Caco-2 (cell line): ENCODE measurements at regions of chr6 and their contacts with region 1.

Region 1: GRCh38 chr6:87139236-87139635 is 16.1 kb upstream of the ZNF292 start:
- DNase-seq: peak in 1 of 2 experiments; percentile 60
- H3K4me3 ChIP-seq: no peak overlapping the region
- H3K4me3 Mint-ChIP-seq: no peak overlapping the region
- H3K27ac Mint-ChIP-seq: no peak overlapping the region
- H3K4me1 ChIP-seq: no peaks in the 10 kb centered on the region
- H3K4me1 Mint-ChIP-seq: no peaks in the 10 kb centered on the region
- H3K27me3 ChIP-seq: no peaks in the 10 kb centered on the region
- H3K27me3 Mint-ChIP-seq: peaks cover 13% of the 10 kb centered on the region
- CTCF ChIP-seq: peak; percentile 61 to 71

Region 2: DNA sequence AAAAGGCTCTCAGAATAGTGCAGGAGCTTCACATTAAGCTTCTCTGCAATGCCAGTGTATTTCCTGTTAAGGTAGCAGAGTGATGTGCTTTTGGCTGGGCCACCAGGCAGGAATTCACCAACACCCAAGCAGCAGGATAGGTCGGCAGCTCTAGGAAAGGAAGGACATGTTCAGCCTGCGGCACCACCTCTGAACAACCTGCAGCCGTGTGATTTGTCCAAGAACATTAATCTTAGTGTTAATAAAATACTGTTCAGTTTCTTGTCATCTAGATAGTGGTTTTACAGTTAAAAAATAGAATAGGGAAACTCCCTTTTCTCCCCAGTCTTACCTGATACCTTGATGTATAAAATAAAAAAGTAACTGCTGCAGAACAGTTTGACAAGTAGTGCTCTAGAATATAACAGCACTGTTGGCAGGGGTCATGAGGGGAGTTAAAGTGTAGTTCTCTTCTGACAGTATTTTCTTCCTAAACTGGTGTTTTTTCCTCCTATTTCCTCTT is 34.9 kb after region 1 on chr6:
- CTCF ChIA-PET with region 1: no interaction called
- POLR2A ChIA-PET with region 1: no interaction called
- intact Hi-C with region 1: no loop called
- DNase-seq: no peak
- H3K4me3 ChIP-seq: no peak overlapping the region
- H3K4me3 Mint-ChIP-seq: no peak overlapping the region
- H3K27ac Mint-ChIP-seq: no peak overlapping the region
- H3K4me1 ChIP-seq: 0 out of 2 replicates have a peak, but pooled peaks cover 7% of the 10 kb centered on the region
- H3K4me1 Mint-ChIP-seq: no peaks in the 10 kb centered on the region
- H3K27me3 ChIP-seq: no peaks in the 10 kb centered on the region
- H3K27me3 Mint-ChIP-seq: no peaks in the 10 kb centered on the region
- CTCF ChIP-seq: no peak

Region 3: GRCh38 chr6:87237804-87238203 is 98.6 kb after region 1 on chr6:
- CTCF ChIA-PET with region 1: no interaction called
- POLR2A ChIA-PET with region 1: no interaction called
- intact Hi-C with region 1: loop called (anchors 1 kb)
- DNase-seq: no peak
- H3K4me3 ChIP-seq: no peak overlapping the region
- H3K4me3 Mint-ChIP-seq: no peak overlapping the region
- H3K27ac Mint-ChIP-seq: no peak overlapping the region
- H3K4me1 ChIP-seq: peaks cover 13% of the 10 kb centered on the region
- H3K4me1 Mint-ChIP-seq: peaks cover 13% of the 10 kb centered on the region
- H3K27me3 ChIP-seq: no peaks in the 10 kb centered on the region
- H3K27me3 Mint-ChIP-seq: no peaks in the 10 kb centered on the region
- CTCF ChIP-seq: peak; percentile 25 to 49

Region 4: DNA sequence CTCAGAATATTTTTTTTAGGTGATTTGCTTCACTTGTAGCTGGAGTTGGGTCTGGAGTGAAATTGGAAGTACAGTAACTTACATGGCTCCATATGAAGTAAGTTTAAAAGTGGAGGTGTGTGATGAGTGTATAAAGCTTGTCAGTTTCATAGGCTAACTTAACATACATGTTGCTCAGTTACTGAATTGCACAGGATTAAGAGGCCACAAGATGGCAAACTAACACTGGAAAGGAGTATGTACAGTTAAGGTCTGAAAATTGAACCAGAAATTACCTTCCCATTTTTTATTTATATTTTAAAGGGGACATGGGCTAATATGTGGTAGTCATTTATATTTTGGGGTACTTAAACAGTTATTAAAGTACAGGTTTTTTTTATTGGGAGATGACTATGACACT is 137.9 kb after region 1 on chr6:
- CTCF ChIA-PET with region 1: no interaction called
- POLR2A ChIA-PET with region 1: no interaction called
- intact Hi-C with region 1: loop called (anchors 5 kb)
- DNase-seq: peak in 1 of 2 experiments; percentile 12
- H3K4me3 ChIP-seq: no peak overlapping the region
- H3K4me3 Mint-ChIP-seq: no peak overlapping the region
- H3K27ac Mint-ChIP-seq: no peak overlapping the region
- H3K4me1 ChIP-seq: no peaks in the 10 kb centered on the region
- H3K4me1 Mint-ChIP-seq: no peaks in the 10 kb centered on the region
- H3K27me3 ChIP-seq: no peaks in the 10 kb centered on the region
- H3K27me3 Mint-ChIP-seq: no peaks in the 10 kb centered on the region
- CTCF ChIP-seq: peak in 1 of 2 experiments; percentile 47